GM13977 (cell line): ENCODE measurements at regions of chr10 and their contacts with region 1.

Region 1: GRCh38 chr10:72364239-72364777 is 9.6 kb upstream of the DNAJB12 start:
- DNase-seq: peak; percentile 79
- CTCF ChIP-seq: peak; percentile 92

Region 2: DNA sequence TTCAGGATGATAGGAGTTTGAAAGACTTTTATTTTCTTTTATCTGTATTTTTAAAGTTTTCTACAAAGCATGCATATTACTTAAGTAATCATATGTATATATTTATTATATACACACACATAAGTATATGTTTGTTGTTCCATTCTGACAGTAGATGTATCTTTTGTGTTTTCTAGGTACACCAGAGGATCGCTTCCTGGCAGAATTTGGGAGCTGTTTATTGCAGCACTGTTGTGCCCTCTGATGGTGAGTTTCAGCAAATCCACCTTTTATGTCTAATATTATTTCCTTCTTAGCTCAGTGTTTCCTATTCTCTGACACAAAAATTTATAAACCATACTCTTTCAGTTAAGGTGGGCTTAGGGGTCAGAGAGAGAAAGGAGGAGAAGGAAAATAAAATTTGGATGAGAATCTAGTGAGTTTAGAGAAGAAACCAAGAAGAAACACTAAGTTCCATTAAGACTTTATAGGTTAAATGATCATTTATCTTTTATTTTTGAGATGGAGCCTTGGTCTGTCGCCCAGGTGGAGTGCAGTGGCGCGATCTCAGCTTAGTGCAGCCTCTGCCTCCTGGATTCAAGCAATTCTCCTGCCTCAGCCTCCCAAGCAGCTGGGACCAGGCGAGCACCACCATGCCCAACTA is 470.0 kb after region 1 on chr10:
- in situ Hi-C with region 1: loop called (anchors 10 kb)
- DNase-seq: peak; percentile 52
- CTCF ChIP-seq: peak; percentile 71

Region 3: DNA sequence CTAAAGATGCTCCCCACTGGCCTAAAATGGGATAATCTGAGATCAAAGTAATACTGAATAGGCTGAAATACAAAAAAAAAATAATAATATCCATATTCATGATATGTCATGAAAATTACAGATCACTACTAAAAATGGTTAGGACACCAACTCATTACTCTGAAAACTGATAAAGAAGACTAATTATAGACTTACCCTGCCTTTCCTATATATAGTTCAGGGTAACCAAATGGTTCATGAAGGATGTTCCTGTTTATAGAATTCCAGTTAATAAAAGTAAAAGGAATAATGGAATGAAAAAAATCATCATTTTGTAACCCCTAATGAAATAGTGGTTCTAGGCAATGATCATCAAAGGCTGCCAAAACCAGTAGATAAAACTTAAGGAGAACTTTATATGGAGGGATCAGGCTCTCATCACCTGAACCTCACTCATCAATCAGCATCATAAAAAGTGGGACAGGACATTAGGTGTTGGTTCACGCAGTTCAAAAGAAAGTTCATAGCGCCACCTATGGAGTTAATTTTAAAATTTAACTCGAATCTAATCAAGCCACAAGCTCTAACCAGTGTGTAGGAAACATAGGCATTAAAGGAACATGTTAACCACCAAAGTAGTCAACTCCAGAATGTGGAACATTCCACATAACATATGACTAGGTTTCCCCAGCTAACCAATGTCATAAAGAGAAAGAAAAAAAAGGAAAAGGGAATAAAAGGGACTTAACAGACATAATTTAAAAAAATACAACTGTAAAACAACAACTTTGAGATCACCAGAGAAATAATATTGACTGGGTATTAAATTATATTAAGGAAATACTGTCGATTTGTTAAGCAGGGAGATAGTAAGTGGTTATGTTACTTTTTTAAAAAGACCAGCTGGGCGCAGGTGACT is 696.7 kb after region 1 on chr10:
- in situ Hi-C with region 1: loop called (anchors 25 kb)
- DNase-seq: peak; percentile 30
- CTCF ChIP-seq: peak; percentile 44